BJ (cell line): ENCODE measurements at regions of chr11 and their contacts with region 1.

Region 1: GRCh38 chr11:123246749-123247495 is 51.9 kb upstream of the CLMP start:
- DNase-seq: no peak
- H3K4me3 ChIP-seq: no peak overlapping the region
- H3K27me3 ChIP-seq: no peaks in the 10 kb centered on the region
- CTCF ChIP-seq: peak; percentile 97

Region 2: GRCh38 chr11:122998727-122999366 is 248.1 kb before region 1 on chr11:
- CTCF ChIA-PET with region 1: no interaction called
- POLR2A ChIA-PET with region 1: no interaction called
- DNase-seq: peak; percentile 19
- H3K4me3 ChIP-seq: no peak overlapping the region
- H3K27me3 ChIP-seq: 0 out of 2 replicates have a peak, but pooled peaks cover 2% of the 10 kb centered on the region
- CTCF ChIP-seq: no peak

Region 3: GRCh38 chr11:123103326-123103980 is 143.5 kb before region 1 on chr11:
- CTCF ChIA-PET with region 1: interaction called, 96 read pairs
- POLR2A ChIA-PET with region 1: no interaction called
- DNase-seq: peak; percentile 46
- H3K4me3 ChIP-seq: no peak overlapping the region
- H3K27me3 ChIP-seq: no peaks in the 10 kb centered on the region
- CTCF ChIP-seq: peak; percentile 66

Region 4: GRCh38 chr11:123110356-123110755 is 136.6 kb before region 1 on chr11:
- CTCF ChIA-PET with region 1: interaction called, 96 read pairs
- POLR2A ChIA-PET with region 1: interaction called, 3 read pairs
- DNase-seq: no peak
- H3K4me3 ChIP-seq: no peak overlapping the region
- H3K27me3 ChIP-seq: no peaks in the 10 kb centered on the region
- CTCF ChIP-seq: no peak

Region 5: DNA sequence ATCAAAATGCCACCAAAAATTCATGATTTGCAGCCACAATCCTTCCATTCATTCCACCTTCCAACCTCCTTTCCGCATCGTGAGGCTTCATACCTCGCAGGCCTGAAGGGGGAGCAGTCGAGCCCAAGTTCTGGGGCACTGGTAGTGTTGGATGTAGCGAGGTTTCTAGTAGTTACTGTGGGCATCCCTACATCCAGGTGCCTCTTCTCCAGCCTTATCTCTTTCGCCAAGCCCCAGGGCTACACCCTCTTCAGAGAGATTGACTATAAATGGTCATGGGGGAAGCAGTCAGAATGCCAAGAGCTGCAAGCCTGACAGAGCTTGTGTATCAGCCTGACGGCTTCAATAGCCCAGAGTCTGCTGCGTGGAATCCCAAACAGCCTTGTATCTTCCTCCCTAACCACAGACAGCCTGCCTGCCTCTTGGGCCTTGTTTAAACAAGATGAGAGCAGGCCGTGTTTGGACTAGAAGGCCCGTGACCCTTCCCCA is 80.8 kb before region 1 on chr11:
- CTCF ChIA-PET with region 1: interaction called, 14 read pairs
- POLR2A ChIA-PET with region 1: interaction called, 4 read pairs
- DNase-seq: no peak
- H3K4me3 ChIP-seq: no peak overlapping the region
- H3K27me3 ChIP-seq: no peaks in the 10 kb centered on the region
- CTCF ChIP-seq: peak; percentile 66

Region 6: GRCh38 chr11:123174196-123175183 is 72.4 kb before region 1 on chr11:
- CTCF ChIA-PET with region 1: interaction called, 14 read pairs
- POLR2A ChIA-PET with region 1: no interaction called
- DNase-seq: peak; percentile 99
- H3K4me3 ChIP-seq: no peak overlapping the region
- H3K27me3 ChIP-seq: no peaks in the 10 kb centered on the region
- CTCF ChIP-seq: no peak